ENCODE measurements at regions of chr4 and their contacts with region 1.

Region 1: GRCh38 chr4:158722917-158723793 is at the start of gene PPID:
- DNase-seq: peak; percentile 88
- H3K4me3 Mint-ChIP-seq: peak within 1 kb of the TSS; percentile 98
- H3K27ac Mint-ChIP-seq: peak within 1 kb of the TSS; percentile 99
- H3K4me1 Mint-ChIP-seq: peaks cover 41% of the 10 kb centered on the region
- H3K27me3 Mint-ChIP-seq: no peaks in the 10 kb centered on the region
- total RNA-seq, gene PPID: 55.4 to 55.6 TPM

Region 2: GRCh38 chr4:158768555-158769174 is 45.5 kb after region 1 on chr4 and contains the start of gene FNIP2:
- CTCF ChIA-PET with region 1: interaction called, 4 read pairs
- intact Hi-C with region 1: loop called (anchors 1 kb)
- DNase-seq: peak; percentile 73
- H3K4me3 Mint-ChIP-seq: peak within 1 kb of the TSS; percentile 96
- H3K27ac Mint-ChIP-seq: peak within 1 kb of the TSS; percentile 90
- H3K4me1 Mint-ChIP-seq: peaks cover 39% of the 10 kb centered on the region
- H3K27me3 Mint-ChIP-seq: no peaks in the 10 kb centered on the region
- total RNA-seq, gene FNIP2: 10.1 to 11.3 TPM

Region 3: GRCh38 chr4:160350847-160351417 is 1627.8 kb after region 1 on chr4:
- CTCF ChIA-PET with region 1: no interaction called
- intact Hi-C with region 1: no loop called
- DNase-seq: no peak
- H3K4me3 Mint-ChIP-seq: no peak overlapping the region
- H3K27ac Mint-ChIP-seq: no peak overlapping the region
- H3K4me1 Mint-ChIP-seq: no peaks in the 10 kb centered on the region
- H3K27me3 Mint-ChIP-seq: no peaks in the 10 kb centered on the region